ENCODE measurements at regions of chr4 and their contacts with region 1.

Region 1: GRCh38 chr4:18593445-18594002 is 572.0 kb upstream of the LCORL start:
- DNase-seq: peak; percentile 57
- H3K4me3 Mint-ChIP-seq: no peak overlapping the region
- H3K27ac Mint-ChIP-seq: no peak overlapping the region
- H3K4me1 Mint-ChIP-seq: peaks cover 5% of the 10 kb centered on the region
- H3K27me3 Mint-ChIP-seq: peaks cover 14% of the 10 kb centered on the region

Region 2: GRCh38 chr4:17636696-17637622 is 956.6 kb before region 1 on chr4:
- CTCF ChIA-PET with region 1: no interaction called
- intact Hi-C with region 1: loop called (anchors 5 kb)
- DNase-seq: peak; percentile 82
- H3K4me3 Mint-ChIP-seq: no peak overlapping the region
- H3K27ac Mint-ChIP-seq: no peak overlapping the region
- H3K4me1 Mint-ChIP-seq: no peaks in the 10 kb centered on the region
- H3K27me3 Mint-ChIP-seq: no peaks in the 10 kb centered on the region

Region 3: GRCh38 chr4:17817020-17817419 is 776.5 kb before region 1 on chr4:
- CTCF ChIA-PET with region 1: interaction called, 3 read pairs
- intact Hi-C with region 1: loop called (anchors 1 kb)
- DNase-seq: no peak
- H3K4me3 Mint-ChIP-seq: no peak overlapping the region
- H3K27ac Mint-ChIP-seq: no peak overlapping the region
- H3K4me1 Mint-ChIP-seq: peaks cover 12% of the 10 kb centered on the region
- H3K27me3 Mint-ChIP-seq: no peaks in the 10 kb centered on the region

Region 4: GRCh38 chr4:18021722-18022571 is 571.6 kb before region 1 on chr4 and contains the start of gene LCORL:
- CTCF ChIA-PET with region 1: no interaction called
- intact Hi-C with region 1: loop called (anchors 2 kb)
- DNase-seq: peak; percentile 89
- H3K4me3 Mint-ChIP-seq: peak within 1 kb of the TSS; percentile 98
- H3K27ac Mint-ChIP-seq: peak within 1 kb of the TSS; percentile 79
- H3K4me1 Mint-ChIP-seq: peaks cover 14% of the 10 kb centered on the region
- H3K27me3 Mint-ChIP-seq: peaks cover 16% of the 10 kb centered on the region
- total RNA-seq, gene LCORL: 8.6 to 9.4 TPM

Measured in activated naive CD4-positive, alpha-beta T cell treated with anti-CD3 and anti-CD28 coated beads for 36 hours (primary cell).